ENCODE measurements at regions of chr3 and their contacts with region 1.

Region 1: GRCh38 chr3:196609343-196609775 is 30.1 kb upstream of the NRROS start:
- DNase-seq: peak; percentile 85
- H3K4me3 Mint-ChIP-seq: peak overlapping the region; percentile 20
- H3K27ac Mint-ChIP-seq: peak overlapping the region; percentile 56
- H3K4me1 Mint-ChIP-seq: peaks cover 43% of the 10 kb centered on the region
- H3K27me3 Mint-ChIP-seq: peaks cover 2% of the 10 kb centered on the region

Region 2: GRCh38 chr3:196518966-196519717 is 90.2 kb before region 1 on chr3:
- intact Hi-C with region 1: no loop called
- DNase-seq: peak; percentile 40
- H3K4me3 Mint-ChIP-seq: no peak overlapping the region
- H3K27ac Mint-ChIP-seq: no peak overlapping the region
- H3K4me1 Mint-ChIP-seq: no peaks in the 10 kb centered on the region
- H3K27me3 Mint-ChIP-seq: peaks cover 3% of the 10 kb centered on the region

Region 3: DNA sequence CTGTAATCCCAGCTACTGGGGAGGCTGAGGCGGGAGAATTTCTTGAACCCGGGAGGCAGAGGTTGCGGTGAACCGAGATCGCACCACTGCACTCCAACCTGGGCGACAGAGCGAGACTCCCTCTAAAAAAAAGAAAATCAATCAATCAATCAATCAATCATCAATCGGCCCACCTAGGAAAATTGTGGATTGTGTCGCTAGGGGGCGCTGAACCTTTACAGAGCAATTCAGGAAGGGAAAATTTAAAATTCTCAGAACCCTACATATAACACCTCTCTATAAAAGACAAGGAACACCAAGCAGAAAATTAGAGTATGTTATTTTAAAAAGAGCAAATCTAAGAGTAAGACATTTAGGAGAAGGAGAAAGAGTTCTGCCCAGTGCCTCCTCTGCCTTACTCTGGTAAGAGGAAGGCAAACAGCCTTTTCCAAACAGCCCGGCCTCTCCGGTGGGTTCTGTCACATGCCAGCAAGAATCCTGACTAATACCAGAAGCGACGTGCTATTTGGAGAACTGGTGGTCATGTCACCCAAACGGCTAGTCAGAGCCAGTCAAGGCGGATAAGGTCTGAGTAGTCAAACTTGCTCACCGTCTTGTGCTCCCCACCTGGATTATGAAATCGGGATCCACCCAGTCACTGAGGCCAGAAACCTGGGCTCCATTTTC is 71.9 kb before region 1 on chr3:
- intact Hi-C with region 1: loop called (anchors 2 kb)
- DNase-seq: peak; percentile 33
- H3K4me3 Mint-ChIP-seq: no peak overlapping the region
- H3K27ac Mint-ChIP-seq: no peak overlapping the region
- H3K4me1 Mint-ChIP-seq: peaks cover 5% of the 10 kb centered on the region
- H3K27me3 Mint-ChIP-seq: peaks cover 12% of the 10 kb centered on the region

Region 4: DNA sequence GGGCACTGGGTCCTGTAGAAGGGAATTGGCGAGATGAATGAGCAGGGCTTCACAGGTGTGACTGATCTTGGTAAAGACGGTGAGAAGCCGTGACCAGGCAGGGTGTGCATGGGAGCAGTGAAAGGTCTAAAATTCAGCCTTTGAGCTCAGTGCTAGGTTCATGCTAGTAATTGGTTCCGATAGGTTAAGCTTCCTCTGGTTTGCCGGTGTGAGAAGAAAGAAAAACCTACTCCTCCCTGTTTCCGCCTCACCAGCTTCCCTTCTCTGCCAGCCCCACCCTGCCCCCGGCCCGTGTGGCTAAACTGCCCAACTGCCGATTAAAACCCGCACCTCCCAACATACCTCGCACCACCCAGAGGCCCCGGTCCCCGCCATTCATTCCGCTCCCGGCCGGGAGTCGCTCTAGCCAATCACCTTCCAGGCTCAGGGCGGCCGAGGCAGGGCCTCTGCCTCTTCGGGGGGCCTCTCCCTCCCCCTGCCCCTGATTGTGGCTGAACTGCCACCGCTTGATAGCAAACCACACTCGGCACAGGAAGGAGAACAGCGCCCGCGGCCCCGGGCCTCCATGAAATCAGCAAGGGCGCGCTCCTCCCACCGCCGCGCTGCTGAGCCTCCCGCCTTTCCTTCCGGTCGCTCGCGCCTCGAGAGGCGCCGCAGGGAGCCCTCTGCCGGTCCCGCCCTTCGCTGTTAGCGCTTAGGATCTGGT is 22.8 kb after region 1 on chr3:
- intact Hi-C with region 1: loop called (anchors 1 kb)
- DNase-seq: peak; percentile 90
- H3K4me3 Mint-ChIP-seq: peak overlapping the region; percentile 86
- H3K27ac Mint-ChIP-seq: peak overlapping the region; percentile 93
- H3K4me1 Mint-ChIP-seq: peaks cover 52% of the 10 kb centered on the region
- H3K27me3 Mint-ChIP-seq: no peaks in the 10 kb centered on the region

Region 5: DNA sequence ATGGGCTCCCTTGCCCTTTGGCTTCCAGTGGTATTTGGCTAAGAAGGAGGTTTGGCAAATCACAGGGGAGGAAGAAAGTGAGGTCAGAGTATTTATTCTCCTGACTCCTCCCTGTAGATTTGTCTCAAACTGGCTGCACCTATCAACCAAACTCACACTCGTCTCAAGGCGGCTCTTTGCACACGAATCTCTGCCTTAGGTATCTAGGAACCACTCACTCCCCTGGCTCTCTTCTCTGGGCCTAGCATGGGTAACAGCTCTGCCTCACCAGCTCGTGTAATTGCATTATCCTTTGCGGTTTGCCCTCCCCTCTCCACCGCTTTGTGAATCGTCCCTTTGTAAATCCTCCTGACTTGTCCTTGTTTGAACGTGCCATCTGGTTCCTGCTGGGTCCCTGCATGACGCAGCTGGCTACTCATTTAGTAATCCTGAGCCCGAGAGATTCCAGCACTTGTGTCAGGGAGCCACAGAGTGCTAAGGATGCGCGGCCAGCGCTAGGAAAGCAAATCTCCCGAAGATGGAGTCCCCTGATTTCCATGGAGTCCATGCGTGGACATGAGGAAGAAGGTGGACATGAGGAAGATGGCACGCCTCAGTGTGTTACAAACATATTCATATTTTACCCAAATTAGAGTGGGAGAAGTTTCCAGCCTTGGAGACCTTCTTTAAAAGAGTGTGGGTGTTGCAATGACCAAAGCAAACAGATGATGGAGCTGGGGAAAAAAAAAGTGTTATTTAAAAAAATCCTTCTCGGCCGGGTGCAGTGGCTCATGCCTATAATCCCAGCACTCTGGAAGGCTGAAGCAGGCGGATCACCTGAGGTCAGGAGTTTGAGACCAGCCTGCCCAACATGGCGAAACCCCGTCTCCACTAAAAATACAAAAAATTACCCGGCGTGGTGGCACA is 56.9 kb after region 1 on chr3:
- intact Hi-C with region 1: no loop called
- DNase-seq: no peak
- H3K4me3 Mint-ChIP-seq: no peak overlapping the region
- H3K27ac Mint-ChIP-seq: no peak overlapping the region
- H3K4me1 Mint-ChIP-seq: peaks cover 12% of the 10 kb centered on the region
- H3K27me3 Mint-ChIP-seq: peaks cover 3% of the 10 kb centered on the region

Region 6: GRCh38 chr3:196684548-196685407 is 75.4 kb after region 1 on chr3:
- intact Hi-C with region 1: loop called (anchors 1 kb)
- DNase-seq: peak; percentile 47
- H3K4me3 Mint-ChIP-seq: peak overlapping the region; percentile 1
- H3K27ac Mint-ChIP-seq: peak overlapping the region; percentile 9
- H3K4me1 Mint-ChIP-seq: peaks cover 29% of the 10 kb centered on the region
- H3K27me3 Mint-ChIP-seq: peaks cover 2% of the 10 kb centered on the region

Region 7: GRCh38 chr3:196711838-196712513 is 102.6 kb after region 1 on chr3 and contains the starts of genes CEP19 and PIGX:
- intact Hi-C with region 1: loop called (anchors 1 kb)
- DNase-seq: peak; percentile 91
- H3K4me3 Mint-ChIP-seq: peak within 1 kb of the TSS; percentile 90
- H3K27ac Mint-ChIP-seq: peak within 1 kb of the TSS; percentile 98
- H3K4me1 Mint-ChIP-seq: peaks cover 49% of the 10 kb centered on the region
- H3K27me3 Mint-ChIP-seq: no peaks in the 10 kb centered on the region
- total RNA-seq, gene CEP19: 3.9 and 4.1 TPM in 2 replicates
- total RNA-seq, gene PIGX: 49.7 and 52.1 TPM in 2 replicates

Region 8: GRCh38 chr3:196942226-196942914 is 333.0 kb after region 1 on chr3 and contains the start of gene NCBP2:
- intact Hi-C with region 1: loop called (anchors 1 kb)
- DNase-seq: peak; percentile 100
- H3K4me3 Mint-ChIP-seq: peak within 1 kb of the TSS; percentile 100
- H3K27ac Mint-ChIP-seq: peak within 1 kb of the TSS; percentile 97
- H3K4me1 Mint-ChIP-seq: peaks cover 55% of the 10 kb centered on the region
- H3K27me3 Mint-ChIP-seq: peaks cover 2% of the 10 kb centered on the region
- total RNA-seq, gene NCBP2: 102 and 111 TPM in 2 replicates

Measured in activated T-helper 1 cell treated with anti-CD3 and anti-CD28 coated beads, Interleukin-12 subunit alpha, Interleukin-12 subunit beta, Interleukin-2, Interleukin-4 antibody, amounts not matched to agents 30 ng/mL and 10 ng/mL and 1 ng/mL, durations not matched to agents 14 hours and 24 hours and 36 hours (primary cell).